ENCODE measurements at regions of chr1 and their contacts with region 1.

Region 1: GRCh38 chr1:32964461-32965250 is at the start of gene RNF19B:
- DNase-seq: peak; percentile 85
- ATAC-seq: peak; percentile 96
- H3K4me3 ChIP-seq: peak within 1 kb of the TSS; percentile 71 to 86
- H3K27ac ChIP-seq: peak within 1 kb of the TSS; percentile 84
- H3K4me1 ChIP-seq: peaks cover 20 to 29% of the 10 kb centered on the region in 2 experiments
- H3K27me3 ChIP-seq: no peaks in the 10 kb centered on the region
- CTCF ChIP-seq: no peak
- POLR2A ChIP-seq: peak; percentile 97
- RAD21 ChIP-seq: no peak
- total RNA-seq, gene RNF19B: 22.5 TPM

Region 2: GRCh38 chr1:32953495-32953894 is 11.2 kb before region 1 on chr1:
- CTCF ChIA-PET with region 1: interaction called, 5 read pairs
- POLR2A ChIA-PET with region 1: interaction called, 41 read pairs
- RAD21 ChIA-PET with region 1: no interaction called
- intact Hi-C with region 1: no loop called
- DNase-seq: no peak
- ATAC-seq: peak; percentile 30; the same call in 1 of the 2 replicates
- H3K4me3 ChIP-seq: no peak overlapping the region
- H3K27ac ChIP-seq: no peak overlapping the region
- H3K4me1 ChIP-seq: peaks cover 27 to 49% of the 10 kb centered on the region in 2 experiments
- H3K27me3 ChIP-seq: no peaks in the 10 kb centered on the region
- CTCF ChIP-seq: no peak
- POLR2A ChIP-seq: no peak
- RAD21 ChIP-seq: no peak

Region 3: GRCh38 chr1:32992489-32993323 is 28.1 kb after region 1 on chr1:
- CTCF ChIA-PET with region 1: no interaction called
- POLR2A ChIA-PET with region 1: interaction called, 11 read pairs
- RAD21 ChIA-PET with region 1: interaction called in 1 of 2 experiments, 3 read pairs
- intact Hi-C with region 1: loop called (anchors 2 kb)
- DNase-seq: peak; percentile 71
- ATAC-seq: peak; percentile 92
- H3K4me3 ChIP-seq: peak overlapping the region in 1 of 2 experiments; percentile 18; a peak in 2 of 4 replicates
- H3K27ac ChIP-seq: peak overlapping the region; percentile 47
- H3K4me1 ChIP-seq: peaks cover 51 to 61% of the 10 kb centered on the region in 2 experiments
- H3K27me3 ChIP-seq: no peaks in the 10 kb centered on the region
- CTCF ChIP-seq: no peak
- POLR2A ChIP-seq: no peak
- RAD21 ChIP-seq: no peak

Region 4: DNA sequence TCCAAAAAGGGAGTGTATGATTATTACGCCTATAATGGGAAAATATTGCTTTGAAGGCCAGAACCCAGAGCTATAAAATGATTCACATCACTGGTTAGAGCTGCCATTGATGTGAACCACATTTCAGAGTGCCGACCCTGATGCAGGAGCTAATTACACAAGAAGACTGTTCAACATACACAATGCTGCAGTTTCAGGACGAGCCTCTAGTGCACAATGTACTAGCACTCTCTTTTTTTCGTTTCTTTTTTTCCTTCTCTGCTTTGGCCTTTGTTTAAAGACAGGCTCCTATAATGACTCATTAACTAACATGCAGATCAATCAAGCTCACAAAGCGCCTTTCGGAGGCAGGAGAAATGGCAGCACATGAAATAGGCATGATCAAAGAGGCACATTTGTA is 833.2 kb after region 1 on chr1:
- CTCF ChIA-PET with region 1: no interaction called
- POLR2A ChIA-PET with region 1: no interaction called
- RAD21 ChIA-PET with region 1: no interaction called
- intact Hi-C with region 1: no loop called
- DNase-seq: no peak
- ATAC-seq: no peak
- H3K4me3 ChIP-seq: no peak overlapping the region
- H3K27ac ChIP-seq: no peak overlapping the region
- H3K4me1 ChIP-seq: no peaks in the 10 kb centered on the region
- H3K27me3 ChIP-seq: peaks cover 9% of the 10 kb centered on the region
- CTCF ChIP-seq: no peak
- POLR2A ChIP-seq: no peak
- RAD21 ChIP-seq: no peak